Heart right ventricle (tissue), 16 donors: ENCODE measurements at regions of chr19 and their contacts with region 1.

Region 1: DNA sequence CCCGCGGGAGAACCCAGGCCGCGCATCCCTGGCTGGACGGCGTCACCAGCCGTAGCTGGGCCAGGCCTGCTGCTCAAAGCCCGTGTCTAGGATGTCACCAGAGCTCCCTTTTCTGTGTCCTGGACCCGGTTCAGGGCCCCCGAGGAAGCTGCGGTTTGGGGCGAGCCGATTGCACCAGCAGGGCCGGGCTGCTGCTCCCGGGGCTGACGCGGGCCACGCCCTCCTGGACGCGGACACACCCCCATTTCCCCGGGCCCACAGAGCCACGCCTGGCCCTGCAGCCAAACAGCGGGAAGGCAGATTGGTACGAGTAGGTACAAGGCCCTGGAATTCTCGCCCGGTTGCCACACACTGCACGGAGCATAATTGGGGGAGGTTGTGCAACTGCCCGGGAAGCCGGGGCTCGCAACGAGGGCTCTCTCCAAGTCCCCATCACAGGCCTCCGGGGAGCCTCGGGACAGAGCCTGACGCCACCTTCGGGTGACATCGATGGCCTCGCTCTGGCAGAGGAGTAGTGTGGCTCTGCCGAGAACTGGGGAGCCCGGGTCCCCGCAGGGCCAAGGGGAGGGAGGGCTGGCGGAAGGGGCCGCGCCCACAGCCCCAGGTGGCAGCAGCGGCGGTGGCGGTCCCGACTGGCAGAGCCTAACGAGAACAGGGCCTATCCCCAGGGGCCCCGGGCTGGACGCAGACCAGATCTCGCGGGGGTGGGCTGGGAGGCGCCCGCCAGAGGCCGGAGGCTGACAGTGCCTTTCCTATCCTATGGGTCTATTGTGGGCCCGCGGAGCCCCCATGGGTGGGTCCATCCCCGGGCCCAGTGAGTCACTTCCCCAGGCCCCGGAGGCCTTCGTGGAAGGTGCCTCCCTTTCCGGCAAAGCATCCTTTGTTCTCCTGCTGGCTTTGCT is 23.5 kb downstream of the KCTD15 start:
- DNase-seq: peak; percentile 84 to 86
- ATAC-seq: peak; percentile 87 to 96 (median 90)
- H3K4me3 ChIP-seq: peak overlapping the region; percentile 11 to 72 (median 50)
- H3K27ac ChIP-seq: peak overlapping the region; percentile 71 to 94 (median 86)
- H3K4me1 ChIP-seq: peaks cover 5 to 62% (median 28%) of the 10 kb centered on the region in 9 donors
- H3K27me3 ChIP-seq: peaks cover 0 to 7% (median 0%) of the 10 kb centered on the region in 7 donors
- CTCF ChIP-seq: peak in 3 of 9 donors; percentile 8 to 32 (median 17)

Region 2: DNA sequence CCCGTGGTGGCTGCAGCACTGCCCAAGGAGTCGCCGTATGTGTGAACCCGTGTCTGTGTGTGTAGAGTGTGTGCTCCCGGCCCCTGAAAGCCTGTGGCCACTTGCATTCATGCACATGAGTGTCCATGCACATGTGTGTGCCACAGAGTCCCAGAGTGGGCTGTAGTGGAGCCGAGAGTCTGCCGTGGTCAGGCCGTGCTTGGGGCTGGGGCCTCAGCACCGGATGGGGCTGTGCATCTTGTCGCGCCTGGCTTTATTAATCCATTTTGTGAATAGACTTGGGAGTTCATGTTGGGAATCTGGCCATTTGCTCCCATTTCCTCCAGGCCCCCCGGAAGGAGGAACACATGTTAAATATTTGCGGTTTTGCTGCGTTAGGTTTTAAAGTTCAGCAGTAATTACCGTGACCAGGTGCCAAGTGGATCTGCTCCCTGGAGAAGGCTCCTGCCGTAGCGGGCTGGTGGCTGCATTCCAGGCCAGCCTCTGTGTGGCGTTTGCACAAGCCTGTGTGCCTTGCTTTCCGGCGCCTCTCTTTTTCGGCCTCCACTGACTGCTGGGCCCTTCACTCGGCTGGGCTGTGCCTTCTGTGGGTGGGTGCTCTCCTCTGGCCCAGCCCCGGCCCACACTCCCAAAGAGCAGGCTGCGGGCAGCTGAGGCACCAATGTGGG is 92.7 kb before region 1 on chr19:
- intact Hi-C with region 1: no loop called
- DNase-seq: no peak
- ATAC-seq: no peak
- H3K4me3 ChIP-seq: no peak overlapping the region
- H3K27ac ChIP-seq: no peak overlapping the region
- H3K4me1 ChIP-seq: no peaks in the 10 kb centered on the region
- H3K27me3 ChIP-seq: peaks cover 0 to 39% (median 27%) of the 10 kb centered on the region in 7 donors
- CTCF ChIP-seq: no peak

Region 3: GRCh38 chr19:33883859-33884519 is 63.9 kb after region 1 on chr19:
- intact Hi-C with region 1: loop called in 1 of 10 experiments (anchors 5 kb)
- DNase-seq: peak; percentile 21 to 62
- ATAC-seq: peak; percentile 69 to 93 (median 78)
- H3K4me3 ChIP-seq: peak overlapping the region in 5 of 10 donors; percentile 11 to 25 (median 17)
- H3K27ac ChIP-seq: peak overlapping the region in 9 of 10 donors; percentile 58 to 86 (median 81)
- H3K4me1 ChIP-seq: peaks cover 5 to 40% (median 31%) of the 10 kb centered on the region in 9 donors
- H3K27me3 ChIP-seq: peaks cover 0 to 13% (median 0%) of the 10 kb centered on the region in 7 donors
- CTCF ChIP-seq: no peak

Region 4: GRCh38 chr19:33905937-33906576 is 85.9 kb after region 1 on chr19:
- intact Hi-C with region 1: loop called in 4 of 10 experiments (anchors 1 to 5 kb)
- DNase-seq: peak; percentile 80
- ATAC-seq: peak; percentile 89 to 94 (median 92)
- H3K4me3 ChIP-seq: peak overlapping the region; percentile 43 to 70 (median 53)
- H3K27ac ChIP-seq: peak overlapping the region; percentile 72 to 98 (median 90)
- H3K4me1 ChIP-seq: peaks cover 4 to 36% (median 26%) of the 10 kb centered on the region in 9 donors
- H3K27me3 ChIP-seq: peaks cover 0 to 61% (median 25%) of the 10 kb centered on the region in 7 donors
- CTCF ChIP-seq: no peak

Region 5: GRCh38 chr19:34540811-34541557 is 720.9 kb after region 1 on chr19:
- intact Hi-C with region 1: loop called in 1 of 10 experiments (anchors 10 kb)
- DNase-seq: no peak
- ATAC-seq: no peak
- H3K4me3 ChIP-seq: no peak overlapping the region
- H3K27ac ChIP-seq: no peak overlapping the region
- H3K4me1 ChIP-seq: no peaks in the 10 kb centered on the region
- H3K27me3 ChIP-seq: peaks cover 0 to 9% (median 0%) of the 10 kb centered on the region in 7 donors
- CTCF ChIP-seq: no peak